AG04449 (cell line): ENCODE measurements at regions of chr3 and their contacts with region 1.

Region 1: DNA sequence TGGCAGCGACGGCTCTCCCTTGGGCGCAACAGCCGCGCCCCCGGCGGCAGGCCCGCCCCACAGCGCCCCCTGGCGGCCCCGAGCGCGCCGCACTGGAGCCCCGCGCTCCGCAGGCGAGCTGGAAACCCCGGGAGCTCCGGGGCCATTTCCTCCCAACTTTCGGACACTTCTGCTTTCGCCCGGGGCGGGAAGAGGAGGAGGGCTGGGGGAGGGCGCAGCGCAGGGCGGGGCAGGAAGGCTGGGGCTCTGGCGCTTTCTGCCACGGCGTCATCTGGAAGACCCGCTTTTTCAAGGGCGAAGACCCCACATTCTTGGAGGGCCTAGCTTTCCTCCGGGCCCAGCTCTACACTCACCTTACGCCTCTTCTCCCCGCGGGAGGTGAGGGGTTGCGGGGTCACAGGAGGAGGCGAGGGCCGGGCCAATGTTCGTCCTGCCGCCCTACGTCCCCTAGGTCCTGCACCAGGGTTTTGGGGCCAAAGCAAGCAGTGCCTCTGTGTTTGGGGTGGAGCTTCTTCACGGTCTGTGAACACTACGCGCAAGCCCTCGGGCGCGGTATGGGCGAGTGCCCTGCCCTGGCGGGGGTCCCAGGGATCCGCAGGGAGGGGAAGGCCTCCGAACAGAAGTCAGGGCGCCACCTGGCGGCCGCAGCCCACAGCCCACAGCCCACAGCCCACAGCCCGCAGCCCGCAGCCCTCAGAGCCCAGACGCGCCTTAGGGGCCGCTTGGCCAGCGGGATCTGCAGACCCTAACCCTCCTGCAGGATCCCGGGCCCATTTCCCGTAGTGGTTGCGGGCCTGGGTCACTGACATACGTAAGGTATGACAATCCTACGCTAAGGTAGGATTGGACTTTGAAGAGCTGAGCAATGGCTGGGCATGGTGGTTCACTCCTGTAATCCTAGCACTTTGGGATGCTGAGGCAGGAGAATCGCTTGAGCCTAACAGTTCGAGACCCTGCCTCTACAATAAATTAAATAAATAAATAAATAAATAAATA is 31.1 kb downstream of the FOXL2 start:
- DNase-seq: no peak
- H3K4me3 ChIP-seq: peak overlapping the region; percentile 89
- CTCF ChIP-seq: peak; percentile 89

Region 2: GRCh38 chr3:138051946-138052802 is 863.6 kb before region 1 on chr3:
- CTCF ChIA-PET with region 1: no interaction called
- POLR2A ChIA-PET with region 1: no interaction called
- DNase-seq: no peak
- H3K4me3 ChIP-seq: no peak overlapping the region
- CTCF ChIP-seq: peak; percentile 78

Region 3: DNA sequence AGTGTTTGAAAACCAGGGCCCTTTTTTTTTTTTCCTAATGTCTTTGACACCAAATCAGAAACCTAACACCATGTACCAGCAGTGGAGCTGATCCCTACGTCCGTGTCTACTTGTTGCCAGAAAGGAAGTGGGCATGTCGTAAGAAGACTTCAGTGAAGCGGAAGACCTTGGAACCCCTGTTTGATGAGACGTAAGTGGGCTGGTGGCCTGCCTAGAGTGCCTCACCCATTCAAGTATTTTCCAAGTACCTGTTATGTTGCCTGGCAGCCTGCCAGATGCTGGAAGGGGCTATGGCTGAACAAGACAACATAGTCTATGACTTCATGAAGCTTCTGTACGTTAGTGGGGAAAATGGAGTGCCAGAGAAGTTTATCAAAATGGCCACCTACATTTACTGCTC is 441.6 kb before region 1 on chr3:
- CTCF ChIA-PET with region 1: interaction called, 89 read pairs
- POLR2A ChIA-PET with region 1: no interaction called
- DNase-seq: no peak
- H3K4me3 ChIP-seq: no peak overlapping the region
- CTCF ChIP-seq: no peak

Region 4: DNA sequence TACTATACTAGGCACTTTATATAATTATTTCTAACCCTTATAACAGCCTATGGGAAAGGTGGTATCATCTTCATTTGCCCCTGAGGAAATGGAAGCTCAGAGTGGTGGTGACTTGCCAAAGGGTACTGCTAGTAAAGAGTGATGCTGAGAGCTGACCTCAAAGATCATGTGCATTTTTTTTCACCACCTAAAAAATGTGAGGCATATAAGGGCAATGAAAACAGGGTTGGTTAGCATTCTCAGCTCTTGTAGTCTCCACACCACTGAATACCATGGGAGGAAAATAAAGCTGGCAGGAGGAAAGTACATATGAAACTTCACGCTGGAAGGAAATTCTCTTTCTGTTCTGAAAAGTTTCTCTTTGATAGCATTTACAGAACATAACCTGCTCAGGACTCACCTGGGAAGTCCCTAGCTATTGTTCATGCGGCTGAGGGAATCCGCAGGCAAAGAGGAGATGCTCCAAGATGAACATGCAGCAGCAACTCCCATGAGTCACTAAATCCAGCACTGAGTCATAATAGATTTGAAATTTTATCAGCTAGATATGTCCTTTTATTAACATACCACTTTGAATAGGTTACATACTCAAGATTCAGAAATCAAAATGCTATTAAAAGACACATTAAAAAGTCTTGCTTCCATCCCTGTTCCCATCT is 290.0 kb before region 1 on chr3:
- CTCF ChIA-PET with region 1: interaction called, 24 read pairs
- POLR2A ChIA-PET with region 1: no interaction called
- DNase-seq: no peak
- H3K4me3 ChIP-seq: no peak overlapping the region
- CTCF ChIP-seq: no peak

Region 5: DNA sequence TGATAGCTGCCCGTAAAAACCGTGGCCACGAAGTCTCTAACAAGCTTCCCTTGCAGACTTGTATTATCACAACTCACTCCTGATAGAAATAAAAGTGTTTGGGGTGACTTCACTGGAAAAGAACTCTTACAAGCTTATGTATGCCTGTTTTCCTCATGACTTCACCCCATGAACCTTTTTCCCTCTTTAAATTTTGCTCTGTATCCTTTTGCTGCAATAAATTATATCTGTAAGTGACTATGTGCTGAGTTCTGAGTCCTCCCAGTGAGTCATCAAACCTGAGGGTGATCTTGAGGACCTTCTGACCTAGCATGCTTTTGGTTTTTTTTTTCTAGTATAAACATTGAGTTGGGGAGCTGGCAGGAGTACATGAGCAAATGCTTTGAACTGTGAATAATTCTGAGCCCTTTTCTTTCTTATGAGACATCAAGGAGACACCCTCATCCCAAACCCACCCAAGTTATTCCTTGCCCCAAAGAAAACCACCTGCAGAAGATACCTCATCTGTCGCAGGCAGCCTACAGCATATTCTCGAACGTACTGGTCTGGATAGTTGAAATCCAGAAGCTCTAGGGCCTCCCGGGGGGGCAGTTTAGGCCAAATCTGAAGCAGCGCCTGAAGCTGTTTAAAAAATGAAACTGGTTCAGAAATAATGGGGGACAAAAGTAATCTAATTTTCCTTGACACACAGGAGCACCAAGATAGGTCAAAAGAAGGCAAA is 221.4 kb before region 1 on chr3:
- CTCF ChIA-PET with region 1: interaction called, 684 read pairs
- POLR2A ChIA-PET with region 1: interaction called, 9 read pairs
- DNase-seq: peak; percentile 95
- H3K4me3 ChIP-seq: no peak overlapping the region
- CTCF ChIP-seq: no peak

Region 6: GRCh38 chr3:138786788-138787278 is 129.0 kb before region 1 on chr3:
- CTCF ChIA-PET with region 1: interaction called, 12 read pairs
- POLR2A ChIA-PET with region 1: no interaction called
- DNase-seq: peak; percentile 34
- H3K4me3 ChIP-seq: no peak overlapping the region
- CTCF ChIP-seq: no peak

Region 7: DNA sequence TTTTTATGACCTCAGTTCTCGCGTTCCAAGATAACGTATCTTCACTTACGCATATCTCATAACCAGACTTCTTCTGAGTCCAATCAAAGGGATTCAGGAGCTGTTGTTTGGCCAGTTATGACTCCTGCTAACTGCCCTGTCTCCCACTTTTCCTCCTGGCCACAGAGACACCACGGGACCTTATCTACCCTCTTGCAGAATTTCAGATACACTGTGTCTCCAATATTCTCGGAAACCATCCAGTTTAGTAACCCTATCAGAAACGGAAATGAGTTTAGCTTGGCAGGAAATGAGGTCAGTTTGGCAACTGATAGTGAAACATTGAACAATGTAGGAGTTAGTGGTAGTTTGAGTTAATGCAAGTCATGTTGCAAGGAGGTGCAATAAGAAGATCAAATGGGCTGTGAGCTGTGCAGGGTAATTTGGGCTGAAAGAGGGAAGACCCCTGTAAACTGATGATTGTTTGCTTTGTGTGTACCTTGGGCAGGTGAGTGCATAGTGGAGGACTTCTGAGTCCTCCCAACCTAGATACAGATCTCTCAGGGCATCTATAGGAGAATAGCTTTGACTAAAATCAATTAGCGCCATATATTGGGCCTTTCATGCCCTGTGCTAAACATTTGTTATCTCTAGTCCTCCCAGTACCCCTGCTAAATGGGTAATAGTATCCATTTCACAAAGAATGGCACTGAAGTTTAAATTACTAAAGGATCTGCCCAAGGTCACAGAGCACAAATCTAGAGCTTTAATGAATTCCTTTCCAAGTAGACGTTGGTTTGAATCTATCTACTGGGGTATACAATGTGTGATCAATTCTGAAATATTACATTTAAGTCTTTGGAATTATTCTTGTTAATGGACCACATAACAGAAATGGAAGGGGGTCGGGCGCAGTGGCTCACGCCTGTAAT is 39.8 kb before region 1 on chr3:
- CTCF ChIA-PET with region 1: interaction called, 13 read pairs
- POLR2A ChIA-PET with region 1: interaction called, 3 read pairs
- DNase-seq: no peak
- H3K4me3 ChIP-seq: no peak overlapping the region
- CTCF ChIP-seq: no peak

Region 8: GRCh38 chr3:139020868-139021234 is 105.0 kb after region 1 on chr3 and contains the start of gene PRR23B:
- CTCF ChIA-PET with region 1: no interaction called
- POLR2A ChIA-PET with region 1: no interaction called
- DNase-seq: no peak
- H3K4me3 ChIP-seq: no peak within 1 kb of the TSS
- CTCF ChIP-seq: no peak

Region 9: GRCh38 chr3:139182143-139182542 is 266.3 kb after region 1 on chr3:
- CTCF ChIA-PET with region 1: no interaction called
- POLR2A ChIA-PET with region 1: no interaction called
- DNase-seq: no peak
- H3K4me3 ChIP-seq: no peak overlapping the region
- CTCF ChIP-seq: no peak